HCT116 (cell line): ENCODE measurements at regions of chr2 and their contacts with region 1.

Region 1: DNA sequence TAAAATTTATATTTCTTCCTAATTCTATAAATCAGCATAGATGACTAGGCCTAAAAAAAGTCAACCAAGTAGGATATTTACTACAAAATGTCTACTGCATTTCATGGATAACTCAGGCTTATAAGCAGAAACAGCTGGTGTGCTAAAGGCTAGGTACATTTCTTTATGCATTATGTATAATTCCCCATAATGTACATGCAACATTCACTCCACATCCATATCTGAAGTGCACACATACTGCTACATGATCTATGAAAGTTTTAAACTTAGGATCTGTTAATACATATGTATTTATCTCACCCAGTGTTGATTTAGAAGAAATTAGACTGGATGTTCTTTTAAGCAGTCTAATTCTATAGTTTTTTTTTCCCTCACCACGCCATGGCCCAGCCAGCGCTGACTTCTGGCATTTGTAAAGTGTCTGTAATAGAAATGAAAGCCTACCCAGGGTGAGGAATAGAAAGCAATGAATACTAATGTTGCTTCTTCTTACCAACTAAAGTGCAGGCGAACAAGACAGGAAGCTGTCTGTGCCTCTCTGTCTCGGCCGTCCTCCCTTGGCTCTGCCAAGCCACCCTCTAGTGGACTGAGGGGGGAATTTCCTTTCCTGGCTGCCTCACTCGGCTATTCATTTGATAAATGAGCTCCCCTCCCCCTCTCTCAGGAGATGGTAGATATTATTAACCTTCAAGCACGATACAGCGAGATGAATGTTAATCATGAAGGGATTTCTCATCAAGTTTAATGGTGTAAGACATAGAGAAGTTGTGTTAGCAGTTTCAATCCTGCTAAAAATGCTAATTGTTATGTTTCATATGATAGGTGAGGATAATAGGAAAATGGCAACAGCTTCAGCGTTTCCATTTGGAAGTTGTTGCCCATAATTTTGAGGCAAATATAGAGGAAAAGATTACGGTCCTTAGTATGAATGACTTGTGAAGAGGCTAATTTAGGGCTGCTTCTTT is 384.5 kb downstream of the MTX2 start:
- DNase-seq: peak; percentile 72
- ATAC-seq: peak; percentile 95
- H3K4me3 ChIP-seq: peak overlapping the region in 1 of 2 experiments; percentile 15; a peak in 1 of 4 replicates
- H3K27ac ChIP-seq: no peak overlapping the region
- H3K4me1 ChIP-seq: peaks cover 2 to 13% of the 10 kb centered on the region in 2 experiments; a peak in 2 of 4 replicates
- H3K27me3 ChIP-seq: peaks cover 9% of the 10 kb centered on the region
- CTCF ChIP-seq: peak; percentile 55 to 87 (median 81); a peak in 5 of 6 replicates
- POLR2A ChIP-seq: no peak
- RAD21 ChIP-seq: peak; percentile 51

Region 2: GRCh38 chr2:176140513-176141317 is 513.0 kb before region 1 on chr2:
- CTCF ChIA-PET with region 1: interaction called, 18 read pairs
- POLR2A ChIA-PET with region 1: interaction called, 5 read pairs
- RAD21 ChIA-PET with region 1: interaction called in 1 of 2 experiments, 3 read pairs
- intact Hi-C with region 1: no loop called
- DNase-seq: peak; percentile 48
- ATAC-seq: peak; percentile 90
- H3K4me3 ChIP-seq: peak overlapping the region; percentile 25 to 40
- H3K27ac ChIP-seq: no peak overlapping the region; the same call in 1 of the 2 replicates
- H3K4me1 ChIP-seq: peaks cover 2 to 18% of the 10 kb centered on the region in 2 experiments; a peak in 3 of 4 replicates
- H3K27me3 ChIP-seq: no peaks in the 10 kb centered on the region
- CTCF ChIP-seq: peak; percentile 83 to 97 (median 86)
- POLR2A ChIP-seq: no peak
- RAD21 ChIP-seq: peak; percentile 98

Region 3: DNA sequence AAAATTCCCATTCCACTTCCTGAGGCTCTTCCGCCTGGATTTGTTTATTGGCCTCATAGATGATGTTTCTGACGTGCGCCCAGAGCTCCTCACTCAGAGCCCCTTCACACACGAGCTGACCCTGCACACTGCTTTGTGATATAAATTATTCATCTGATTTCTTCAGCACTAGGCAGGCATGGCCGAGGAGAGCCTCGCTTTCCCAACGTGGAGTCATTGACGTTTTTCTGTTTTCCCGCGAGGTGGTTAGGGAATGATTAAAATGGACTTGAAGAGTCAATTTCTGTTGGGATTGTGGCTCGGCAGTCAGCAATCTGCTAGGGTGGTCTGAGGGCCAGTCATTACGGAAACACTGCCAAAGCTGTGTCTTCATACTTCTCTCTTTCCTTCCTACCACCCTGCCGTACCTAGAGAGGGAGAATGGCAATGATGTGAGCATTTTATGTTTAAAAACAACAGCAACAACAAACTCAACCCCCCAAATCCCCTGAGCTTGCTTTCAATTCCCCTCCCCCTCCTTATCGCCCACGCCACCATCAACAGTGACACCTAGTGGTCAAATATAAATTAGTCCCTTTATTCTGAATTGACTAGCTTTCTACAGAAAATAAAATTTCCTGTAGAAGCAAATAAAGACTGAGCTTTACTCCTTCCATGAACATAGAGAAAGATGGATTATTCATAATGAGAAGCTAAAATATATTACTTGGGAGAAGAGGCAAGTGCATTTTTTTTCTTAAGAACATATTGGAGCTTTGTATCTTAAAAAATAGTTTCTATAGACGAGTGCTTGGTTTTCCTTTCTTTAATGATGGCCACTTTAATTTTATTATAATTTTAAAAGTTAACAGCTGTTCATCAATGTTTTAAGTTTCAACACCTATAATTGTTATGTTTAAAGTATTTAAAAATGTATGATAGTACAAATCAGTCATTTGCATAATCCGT is 99.4 kb before region 1 on chr2:
- CTCF ChIA-PET with region 1: interaction called, 9 read pairs
- POLR2A ChIA-PET with region 1: no interaction called
- RAD21 ChIA-PET with region 1: no interaction called
- intact Hi-C with region 1: loop called (anchors 5 kb)
- DNase-seq: peak; percentile 43
- ATAC-seq: peak; percentile 49
- H3K4me3 ChIP-seq: peak overlapping the region; percentile 39 to 58
- H3K27ac ChIP-seq: no peak overlapping the region; the same call in 1 of the 2 replicates
- H3K4me1 ChIP-seq: peaks cover 0 to 25% of the 10 kb centered on the region in 2 experiments; a peak in 2 of 4 replicates
- H3K27me3 ChIP-seq: 0 out of 2 replicates have a peak, but pooled peaks cover 7% of the 10 kb centered on the region
- CTCF ChIP-seq: peak; percentile 57 to 81 (median 69)
- POLR2A ChIP-seq: no peak
- RAD21 ChIP-seq: peak; percentile 78

Region 4: DNA sequence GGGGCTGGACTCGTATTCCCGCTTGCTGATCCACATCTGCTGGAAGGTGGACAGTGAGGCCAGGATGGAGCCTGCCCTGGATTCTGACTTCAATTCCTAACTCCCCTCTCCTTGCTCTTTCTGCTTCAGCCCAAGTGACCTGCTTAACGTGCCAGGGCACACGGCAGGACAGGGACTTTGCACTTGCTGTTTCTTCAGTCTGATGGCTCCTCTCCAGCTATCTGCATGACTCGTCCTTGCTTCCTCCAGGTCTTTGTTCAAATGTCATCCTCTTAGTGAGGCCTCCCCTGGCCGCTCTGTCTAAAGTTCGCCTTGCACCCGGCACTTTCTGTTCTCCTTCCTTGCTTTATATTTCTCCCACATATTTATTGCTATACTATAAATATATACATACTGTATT is 27.0 kb before region 1 on chr2:
- CTCF ChIA-PET with region 1: no interaction called
- POLR2A ChIA-PET with region 1: no interaction called
- RAD21 ChIA-PET with region 1: no interaction called
- intact Hi-C with region 1: no loop called
- DNase-seq: no peak
- ATAC-seq: no peak
- H3K4me3 ChIP-seq: no peak overlapping the region
- H3K27ac ChIP-seq: no peak overlapping the region
- H3K4me1 ChIP-seq: peaks cover 4 to 9% of the 10 kb centered on the region in 2 experiments; a peak in 3 of 4 replicates
- H3K27me3 ChIP-seq: no peaks in the 10 kb centered on the region
- CTCF ChIP-seq: no peak
- POLR2A ChIP-seq: no peak
- RAD21 ChIP-seq: no peak

Region 5: GRCh38 chr2:176669398-176670174 is 15.8 kb after region 1 on chr2:
- CTCF ChIA-PET with region 1: interaction called, 66 read pairs
- POLR2A ChIA-PET with region 1: no interaction called
- RAD21 ChIA-PET with region 1: interaction called in 1 of 2 experiments, 3 read pairs
- intact Hi-C with region 1: no loop called
- DNase-seq: no peak
- ATAC-seq: no peak
- H3K4me3 ChIP-seq: no peak overlapping the region
- H3K27ac ChIP-seq: no peak overlapping the region
- H3K4me1 ChIP-seq: no peaks in the 10 kb centered on the region
- H3K27me3 ChIP-seq: peaks cover 58% of the 10 kb centered on the region
- CTCF ChIP-seq: no peak
- POLR2A ChIP-seq: no peak
- RAD21 ChIP-seq: no peak

Region 6: GRCh38 chr2:177148477-177149154 is 494.9 kb after region 1 on chr2:
- CTCF ChIA-PET with region 1: interaction called, 27 read pairs
- POLR2A ChIA-PET with region 1: no interaction called
- RAD21 ChIA-PET with region 1: interaction called in 1 of 2 experiments, 3 read pairs
- intact Hi-C with region 1: loop called (anchors 5 kb)
- DNase-seq: peak; percentile 68
- ATAC-seq: peak; percentile 99
- H3K4me3 ChIP-seq: peak overlapping the region; percentile 25 to 51
- H3K27ac ChIP-seq: no peak overlapping the region
- H3K4me1 ChIP-seq: peaks cover 0 to 8% of the 10 kb centered on the region in 2 experiments; a peak in 2 of 4 replicates
- H3K27me3 ChIP-seq: no peaks in the 10 kb centered on the region
- CTCF ChIP-seq: peak; percentile 82 to 94 (median 90); a peak in 5 of 6 replicates
- POLR2A ChIP-seq: no peak
- RAD21 ChIP-seq: peak; percentile 79

Region 7: DNA sequence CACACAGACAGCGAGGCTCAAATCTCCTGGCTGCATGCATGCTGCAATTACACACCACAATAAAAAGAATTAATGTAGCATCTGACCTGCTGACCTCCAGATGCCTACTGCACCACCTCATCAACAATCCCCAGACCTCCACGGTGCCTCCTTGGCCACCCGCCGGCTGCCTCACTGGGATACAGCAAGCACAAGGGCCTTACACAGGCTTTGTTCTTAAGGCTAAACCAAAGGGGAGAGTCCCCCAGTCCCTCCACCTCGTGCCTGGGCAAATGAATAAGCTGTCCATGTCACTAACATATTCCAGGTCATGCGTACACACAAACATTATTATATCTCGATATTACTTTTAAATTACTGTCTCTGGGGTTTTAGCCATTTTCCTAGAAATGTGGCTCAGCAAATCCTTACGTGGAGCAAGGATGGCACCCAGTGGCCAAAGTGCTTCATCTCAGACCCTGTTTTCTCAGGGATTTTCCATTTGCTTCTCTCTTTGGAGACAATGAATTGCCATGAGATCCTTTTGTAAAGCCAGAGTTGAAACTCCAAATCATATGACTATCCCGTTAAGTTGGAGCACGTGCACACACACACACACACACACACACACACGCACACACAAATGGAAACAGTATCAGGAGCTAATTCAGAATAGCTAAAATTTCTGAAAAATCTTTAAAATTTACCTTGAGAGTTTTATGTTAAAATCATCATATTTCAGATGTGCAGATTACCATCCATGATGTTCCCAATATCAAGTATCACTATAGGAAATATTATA is 1105.0 kb after region 1 on chr2:
- CTCF ChIA-PET with region 1: no interaction called
- POLR2A ChIA-PET with region 1: no interaction called
- RAD21 ChIA-PET with region 1: no interaction called
- intact Hi-C with region 1: loop called (anchors 5 kb)
- DNase-seq: peak; percentile 41
- ATAC-seq: peak; percentile 57
- H3K4me3 ChIP-seq: no peak overlapping the region
- H3K27ac ChIP-seq: no peak overlapping the region
- H3K4me1 ChIP-seq: peaks cover 0 to 9% of the 10 kb centered on the region in 2 experiments; a peak in 2 of 4 replicates
- H3K27me3 ChIP-seq: no peaks in the 10 kb centered on the region
- CTCF ChIP-seq: peak; percentile 37 to 65 (median 60); a peak in 5 of 6 replicates
- POLR2A ChIP-seq: no peak
- RAD21 ChIP-seq: peak; percentile 84